Psoas muscle (tissue), 8 donors: ENCODE measurements at regions of chr11 and their contacts with region 1.

Region 1: GRCh38 chr11:1832211-1832919 is 2.4 kb upstream of the SYT8 start:
- DNase-seq: peak; percentile 66 to 78
- ATAC-seq: peak; percentile 71 to 92 (median 74)
- H3K4me3 ChIP-seq: peak overlapping the region; percentile 33
- H3K27ac ChIP-seq: no peak overlapping the region
- H3K4me1 ChIP-seq: peaks cover under 1% of the 10 kb centered on the region
- H3K27me3 ChIP-seq: peaks cover 0 to 6% (median 5%) of the 10 kb centered on the region in 3 donors
- CTCF ChIP-seq: peak; percentile 99

Region 2: GRCh38 chr11:1351278-1351937 is 481.0 kb before region 1 on chr11:
- intact Hi-C with region 1: no loop called
- DNase-seq: peak in 1 of 2 donors; percentile 10
- ATAC-seq: no peak
- H3K4me3 ChIP-seq: no peak overlapping the region
- H3K27ac ChIP-seq: no peak overlapping the region
- H3K4me1 ChIP-seq: no peaks in the 10 kb centered on the region
- H3K27me3 ChIP-seq: peaks cover 0 to 24% (median 12%) of the 10 kb centered on the region in 3 donors
- CTCF ChIP-seq: no peak

Region 3: GRCh38 chr11:1652771-1653540 is 179.4 kb before region 1 on chr11:
- intact Hi-C with region 1: loop called in 1 of 2 experiments (anchors 1 kb)
- DNase-seq: peak; percentile 77 to 87
- ATAC-seq: peak; percentile 79 to 95 (median 92)
- H3K4me3 ChIP-seq: no peak overlapping the region
- H3K27ac ChIP-seq: no peak overlapping the region
- H3K4me1 ChIP-seq: no peaks in the 10 kb centered on the region
- H3K27me3 ChIP-seq: peaks cover 0 to 3% (median 2%) of the 10 kb centered on the region in 3 donors
- CTCF ChIP-seq: peak; percentile 98

Region 4: DNA sequence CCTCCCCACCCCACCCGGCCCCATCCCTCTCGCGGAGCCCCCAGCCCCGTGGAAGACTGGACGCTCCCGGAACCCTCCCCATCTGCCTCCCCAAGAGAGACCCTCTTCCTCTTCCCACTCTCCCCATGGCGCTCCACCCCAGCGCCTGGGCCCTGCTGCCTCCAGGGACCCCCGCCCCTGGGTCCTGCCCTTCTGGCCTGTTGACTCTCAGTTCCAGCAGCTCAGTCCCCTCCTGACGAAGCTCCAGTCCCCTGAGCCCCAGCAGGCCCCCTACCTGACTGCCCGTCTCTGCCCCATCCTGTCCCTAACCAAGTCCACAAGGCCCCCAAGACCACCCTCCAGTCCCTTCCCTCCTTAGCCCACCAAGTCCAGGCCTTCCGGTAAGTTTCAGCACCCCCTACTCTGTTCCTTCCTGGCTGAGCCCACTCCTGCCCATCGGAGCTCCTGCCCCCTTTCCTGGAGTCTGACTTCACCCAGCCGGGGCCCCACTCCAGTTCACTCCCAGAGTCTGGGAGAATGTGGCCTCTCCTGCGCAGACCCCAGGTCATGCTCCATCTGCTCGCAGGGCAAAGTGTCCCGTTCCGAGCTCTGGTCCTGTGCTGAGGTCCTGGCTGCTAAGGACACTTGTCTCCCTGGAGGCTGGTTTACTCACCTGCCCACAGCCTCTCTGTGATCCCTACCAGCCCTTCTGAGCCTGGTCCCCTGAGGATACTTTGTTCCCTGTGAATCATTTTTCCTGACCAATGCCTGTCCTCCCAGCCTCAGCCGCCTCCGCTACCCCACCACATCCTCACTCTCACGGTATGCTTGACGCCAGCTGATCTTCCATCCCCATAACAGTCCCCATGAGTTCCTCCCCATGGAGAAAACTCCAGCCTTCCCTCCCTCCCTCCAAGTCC is 82.7 kb before region 1 on chr11:
- intact Hi-C with region 1: loop called (anchors 2 to 10 kb)
- DNase-seq: peak in 1 of 2 donors; percentile 69
- ATAC-seq: peak in 3 of 4 donors; percentile 16 to 27 (median 25)
- H3K4me3 ChIP-seq: peak overlapping the region; percentile 67
- H3K27ac ChIP-seq: peak overlapping the region; percentile 79
- H3K4me1 ChIP-seq: peaks cover 72% of the 10 kb centered on the region
- H3K27me3 ChIP-seq: no peaks in the 10 kb centered on the region
- CTCF ChIP-seq: no peak